ENCODE measurements at regions of chr6 and their contacts with region 1.

Region 1: GRCh38 chr6:1609648-1610496 is at the start of gene FOXC1:
- DNase-seq: peak; percentile 93
- H3K4me3 ChIP-seq: peak within 1 kb of the TSS; percentile 66 to 87 (median 77)
- H3K27ac ChIP-seq: peak within 1 kb of the TSS; percentile 75
- H3K4me1 ChIP-seq: peaks cover 10% of the 10 kb centered on the region
- H3K27me3 ChIP-seq: no peaks in the 10 kb centered on the region
- CTCF ChIP-seq: no peak
- total RNA-seq, gene FOXC1: 12.1 to 15.8 TPM

Region 2: GRCh38 chr6:1445650-1446330 is 164.1 kb before region 1 on chr6:
- CTCF ChIA-PET with region 1: no interaction called
- dilution Hi-C with region 1: no loop called
- in situ Hi-C with region 1: no loop called
- intact Hi-C with region 1: no loop called
- DNase-seq: no peak
- H3K4me3 ChIP-seq: no peak overlapping the region
- H3K27ac ChIP-seq: no peak overlapping the region
- H3K4me1 ChIP-seq: no peaks in the 10 kb centered on the region
- H3K27me3 ChIP-seq: peaks cover 4% of the 10 kb centered on the region
- CTCF ChIP-seq: no peak

Region 3: GRCh38 chr6:1686117-1687098 is 76.5 kb after region 1 on chr6:
- CTCF ChIA-PET with region 1: interaction called, 12 read pairs
- dilution Hi-C with region 1: no loop called
- in situ Hi-C with region 1: no loop called
- intact Hi-C with region 1: loop called (anchors 2 kb)
- DNase-seq: peak; percentile 96
- H3K4me3 ChIP-seq: no peak overlapping the region
- H3K27ac ChIP-seq: peak overlapping the region; percentile 87
- H3K4me1 ChIP-seq: peaks cover 36% of the 10 kb centered on the region
- H3K27me3 ChIP-seq: no peaks in the 10 kb centered on the region
- CTCF ChIP-seq: peak; percentile 32 to 45

Region 4: GRCh38 chr6:1952726-1953360 is 343.0 kb after region 1 on chr6:
- CTCF ChIA-PET with region 1: no interaction called
- dilution Hi-C with region 1: no loop called
- in situ Hi-C with region 1: no loop called
- intact Hi-C with region 1: loop called (anchors 5 kb)
- DNase-seq: peak; percentile 99
- H3K4me3 ChIP-seq: peak overlapping the region in 1 of 3 experiments; percentile 7
- H3K27ac ChIP-seq: peak overlapping the region; percentile 97
- H3K4me1 ChIP-seq: peaks cover 13% of the 10 kb centered on the region
- H3K27me3 ChIP-seq: no peaks in the 10 kb centered on the region
- CTCF ChIP-seq: peak in 1 of 2 donors; percentile 6

Region 5: DNA sequence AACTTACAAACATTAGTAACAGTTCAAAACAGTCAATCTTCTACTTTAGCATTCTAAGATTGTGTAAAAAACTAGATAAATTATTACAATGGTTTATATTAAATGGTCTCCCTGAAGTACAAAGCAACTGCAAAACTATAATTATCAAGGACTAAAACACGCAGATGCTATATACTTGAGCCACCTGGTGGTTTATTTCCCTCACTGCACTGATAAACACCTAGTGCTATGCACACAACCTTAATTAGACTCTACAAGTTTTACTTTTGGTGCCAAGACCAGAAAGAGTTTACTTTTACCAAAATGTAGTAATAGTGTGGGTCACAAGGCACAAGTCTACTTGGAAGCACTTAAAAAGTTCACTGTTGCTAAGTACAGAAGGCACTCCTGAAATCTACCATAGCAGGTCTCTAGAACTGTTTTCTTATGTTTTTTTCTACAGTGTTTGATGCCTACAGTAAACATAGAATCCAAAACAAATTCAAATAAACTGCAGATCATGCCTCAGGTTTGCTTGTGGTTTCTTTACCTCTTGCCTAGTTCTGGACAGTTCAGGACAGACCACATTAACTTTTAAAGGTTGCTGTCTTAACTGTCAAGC is 586.3 kb after region 1 on chr6:
- CTCF ChIA-PET with region 1: no interaction called
- dilution Hi-C with region 1: no loop called
- in situ Hi-C with region 1: loop called in 1 of 2 experiments (anchors 10 kb)
- intact Hi-C with region 1: no loop called
- DNase-seq: peak; percentile 40
- H3K4me3 ChIP-seq: no peak overlapping the region
- H3K27ac ChIP-seq: no peak overlapping the region
- H3K4me1 ChIP-seq: peaks cover 12% of the 10 kb centered on the region
- H3K27me3 ChIP-seq: no peaks in the 10 kb centered on the region
- CTCF ChIP-seq: peak; percentile 74 to 84

Measured in mammary epithelial cell (primary cell).